AG04449 (cell line): ENCODE measurements at regions of chr4 and their contacts with region 1.

Region 1: DNA sequence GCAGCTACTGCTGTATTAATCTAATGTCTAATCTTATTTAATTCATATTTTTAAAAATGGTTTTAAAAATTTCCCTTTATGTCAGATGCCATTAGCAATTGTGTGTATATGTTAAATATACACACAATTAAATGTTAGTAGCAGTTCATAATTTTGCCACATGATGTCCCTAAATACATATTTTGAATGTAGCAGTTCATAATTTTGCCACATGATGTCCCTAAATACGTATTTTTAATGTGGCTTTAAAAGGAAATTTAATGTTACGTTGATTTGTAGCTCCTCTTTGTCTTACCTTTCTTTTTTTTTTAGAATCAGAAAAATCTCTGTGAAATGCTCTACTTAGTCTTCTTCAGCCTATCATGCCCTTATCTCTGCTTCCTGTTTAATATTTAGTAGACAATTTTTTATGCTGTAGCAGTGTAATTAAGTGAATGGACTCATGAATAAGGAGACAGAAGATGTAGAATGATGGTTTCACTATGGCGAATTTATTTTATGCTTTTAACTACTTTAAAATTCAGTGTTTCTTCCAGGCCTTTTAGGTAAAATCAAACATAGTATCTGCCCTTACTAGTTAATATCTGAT is 26.1 kb downstream of the RBM46 start:
- DNase-seq: no peak
- H3K4me3 ChIP-seq: no peak overlapping the region
- CTCF ChIP-seq: peak; percentile 32

Region 2: GRCh38 chr4:154928640-154929257 is 121.6 kb after region 1 on chr4:
- CTCF ChIA-PET with region 1: interaction called, 18 read pairs
- POLR2A ChIA-PET with region 1: no interaction called
- DNase-seq: no peak
- H3K4me3 ChIP-seq: no peak overlapping the region
- CTCF ChIP-seq: no peak

Region 3: DNA sequence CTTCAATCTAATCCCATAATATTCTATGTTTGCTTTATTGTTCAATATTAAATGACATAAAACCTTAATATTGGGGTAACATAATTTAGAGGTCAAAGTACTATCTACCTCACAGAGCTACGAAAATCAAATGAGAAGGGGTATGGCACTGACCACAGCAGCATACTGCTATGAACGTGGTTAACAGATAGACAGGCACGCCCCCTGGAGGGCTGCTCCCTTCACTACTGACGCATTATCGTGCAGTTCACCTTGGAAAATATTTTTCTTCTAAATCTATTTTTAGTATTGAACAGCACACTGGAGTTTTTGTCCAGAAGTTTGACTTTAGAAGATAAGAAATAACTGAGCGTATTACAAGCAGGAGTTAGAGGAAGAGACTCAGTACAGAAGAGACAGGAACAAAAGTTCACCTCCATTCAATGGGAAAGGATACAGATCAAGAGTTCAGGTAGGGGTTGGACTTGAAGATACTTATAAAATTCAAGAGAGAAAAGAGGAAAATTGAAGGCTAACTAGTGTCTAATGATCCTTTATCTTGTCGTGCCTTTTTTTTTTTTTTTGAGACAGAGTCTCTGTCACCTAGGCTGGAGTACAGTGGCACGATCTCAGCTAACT is 546.9 kb after region 1 on chr4:
- CTCF ChIA-PET with region 1: interaction called, 20 read pairs
- POLR2A ChIA-PET with region 1: no interaction called
- DNase-seq: no peak
- H3K4me3 ChIP-seq: no peak overlapping the region
- CTCF ChIP-seq: peak; percentile 72

Region 4: DNA sequence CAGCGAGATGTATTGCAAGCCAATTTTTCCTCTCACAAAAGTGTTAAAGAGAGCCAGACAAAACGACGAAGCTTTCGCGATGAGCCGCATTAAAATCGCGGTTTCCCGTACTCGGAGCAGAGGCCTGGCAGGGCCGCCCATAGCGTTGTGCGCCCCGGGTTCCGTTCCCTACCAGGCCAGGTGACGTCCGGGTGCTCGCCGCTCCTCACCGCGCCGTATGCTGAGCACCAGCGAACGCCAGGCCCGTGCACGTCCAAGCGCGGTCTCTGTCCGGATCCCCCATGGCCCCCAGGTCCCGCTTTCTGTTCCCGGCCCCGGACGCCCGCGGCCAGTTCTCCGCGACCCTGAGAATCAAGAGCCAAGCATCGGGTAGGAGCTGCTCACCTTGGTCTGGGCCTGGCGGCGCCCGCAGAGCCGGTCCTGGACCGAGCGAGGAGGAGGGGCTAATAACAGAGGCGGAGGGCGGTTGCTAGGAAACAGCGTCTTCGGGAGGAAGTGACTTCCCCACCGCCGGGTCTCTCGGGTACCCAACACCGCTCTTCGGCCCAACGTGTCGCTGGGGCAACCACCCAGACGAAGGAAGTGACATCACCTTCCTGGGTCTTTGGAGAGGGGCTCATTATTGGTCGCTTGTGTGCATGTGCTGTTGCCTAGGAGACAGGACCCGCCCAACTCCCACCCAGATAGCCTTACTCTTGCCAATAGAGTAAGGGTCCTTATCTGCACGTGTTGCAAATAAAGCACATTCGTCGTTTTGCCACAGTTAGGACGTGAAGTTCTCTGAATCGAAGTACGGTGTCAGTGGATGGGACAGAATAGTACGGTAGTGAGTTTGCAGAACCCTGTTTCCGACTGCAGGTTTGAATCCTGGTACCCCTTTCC is 569.5 kb after region 1 on chr4 and contains the start of gene MAP9:
- CTCF ChIA-PET with region 1: interaction called, 52 read pairs
- POLR2A ChIA-PET with region 1: no interaction called
- DNase-seq: peak; percentile 67
- H3K4me3 ChIP-seq: peak within 1 kb of the TSS; percentile 80
- CTCF ChIP-seq: no peak

Region 5: DNA sequence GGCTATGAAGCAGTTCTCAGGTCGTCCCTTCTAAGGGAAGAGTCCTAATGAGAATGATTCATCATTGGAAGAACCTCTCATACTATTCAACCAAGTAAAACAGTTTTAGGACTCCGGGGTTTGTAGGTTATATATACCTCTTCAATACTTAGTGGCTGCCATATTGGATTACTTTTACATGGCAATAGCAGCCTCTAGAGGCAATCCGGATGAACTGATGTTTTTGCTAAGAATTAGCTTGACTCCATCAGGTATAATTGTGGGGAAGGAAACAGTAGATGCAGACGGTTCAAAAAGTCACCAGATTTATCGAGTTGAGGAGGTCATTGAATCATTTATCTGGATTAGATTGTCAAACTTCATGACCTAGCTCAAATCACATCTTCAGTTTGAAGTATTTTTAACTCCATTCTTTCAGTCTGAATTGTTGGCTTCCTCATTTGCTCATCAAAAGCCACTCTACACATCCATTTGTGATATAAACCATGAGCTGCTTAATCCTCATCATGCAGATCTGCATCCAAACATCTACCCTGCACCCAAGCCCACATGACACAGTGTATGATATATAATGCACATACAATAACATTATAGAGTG is 980.1 kb after region 1 on chr4:
- CTCF ChIA-PET with region 1: interaction called, 11 read pairs
- POLR2A ChIA-PET with region 1: no interaction called
- DNase-seq: no peak
- H3K4me3 ChIP-seq: no peak overlapping the region
- CTCF ChIP-seq: peak; percentile 45